ENCODE measurements at regions of chr10 and their contacts with region 1.

Region 1: DNA sequence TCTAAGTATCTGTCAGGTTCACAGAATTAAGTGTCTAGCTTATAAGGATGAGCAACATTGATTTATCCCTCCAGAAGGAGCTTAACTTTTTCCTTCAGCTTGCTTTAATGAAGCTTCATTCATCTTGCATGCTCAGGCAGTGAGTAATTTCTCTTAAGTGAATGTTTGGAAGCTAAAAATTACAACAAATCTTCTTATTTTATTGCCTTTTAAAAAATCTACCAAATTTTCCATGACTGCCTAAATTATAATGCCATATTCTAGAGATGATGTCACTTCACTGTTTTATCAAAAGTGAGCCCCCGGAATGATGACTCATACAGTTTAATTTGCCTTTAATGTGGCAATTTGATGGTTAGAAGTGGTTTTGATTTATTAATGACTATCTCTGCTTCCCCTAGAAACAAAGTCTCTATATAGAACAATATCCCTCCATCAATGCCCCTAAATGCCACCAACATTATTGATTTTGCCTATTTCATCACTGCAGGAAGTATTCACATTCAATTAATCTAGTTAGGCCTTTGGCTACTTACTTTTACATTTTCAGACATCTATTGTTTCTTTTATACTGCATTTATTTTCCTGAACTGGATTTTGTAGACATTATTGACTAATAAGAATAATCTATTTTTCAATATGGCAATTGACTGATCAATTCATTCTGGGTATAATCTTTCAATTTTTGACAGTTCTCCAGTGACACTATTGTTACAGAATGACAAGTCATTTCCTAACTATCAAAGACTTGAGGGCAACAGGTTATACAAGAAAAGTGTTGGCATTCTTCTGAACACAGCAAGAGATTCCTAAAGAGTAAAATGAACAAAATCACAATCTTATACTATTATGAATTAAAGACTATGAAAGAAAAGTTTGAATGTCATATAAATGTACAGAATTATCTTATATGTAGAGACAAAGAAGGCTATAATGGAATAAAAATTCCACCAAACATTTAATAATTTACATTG is 139.3 kb upstream of the ODAD2 start:
- DNase-seq: no peak
- H3K4me3 Mint-ChIP-seq: no peak overlapping the region
- H3K27ac Mint-ChIP-seq: no peak overlapping the region
- H3K4me1 Mint-ChIP-seq: no peaks in the 10 kb centered on the region
- H3K27me3 Mint-ChIP-seq: no peaks in the 10 kb centered on the region
- CTCF ChIP-seq: no peak

Region 2: DNA sequence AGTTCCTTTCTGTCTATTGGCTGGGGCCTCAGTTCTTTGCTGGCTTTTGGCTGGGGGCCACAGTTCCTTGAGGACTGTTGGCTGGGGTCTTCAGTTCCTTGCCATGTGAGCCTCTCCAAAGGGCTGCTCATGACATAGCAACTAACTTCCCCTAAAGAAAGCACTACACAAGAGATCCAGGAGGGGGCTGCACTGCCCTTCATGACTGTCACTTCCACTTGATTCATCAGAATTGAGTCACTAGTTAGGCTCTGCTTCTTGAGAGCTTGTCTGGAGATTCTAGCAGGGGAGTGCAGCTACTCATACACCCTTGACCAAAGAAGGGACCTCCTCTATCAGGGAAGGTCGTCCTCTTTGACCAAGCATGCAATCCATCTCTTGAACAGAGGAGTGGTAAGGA is 354.5 kb before region 1 on chr10:
- CTCF ChIA-PET with region 1: no interaction called
- POLR2A ChIA-PET with region 1: no interaction called
- intact Hi-C with region 1: loop called (anchors 5 kb)
- DNase-seq: peak; percentile 64
- H3K4me3 Mint-ChIP-seq: no peak overlapping the region
- H3K27ac Mint-ChIP-seq: no peak overlapping the region
- H3K4me1 Mint-ChIP-seq: no peaks in the 10 kb centered on the region
- H3K27me3 Mint-ChIP-seq: no peaks in the 10 kb centered on the region
- CTCF ChIP-seq: peak; percentile 29

Region 3: GRCh38 chr10:28054228-28054837 is 83.9 kb before region 1 on chr10:
- CTCF ChIA-PET with region 1: no interaction called
- POLR2A ChIA-PET with region 1: no interaction called
- intact Hi-C with region 1: no loop called
- DNase-seq: peak; percentile 78
- H3K4me3 Mint-ChIP-seq: peak overlapping the region; percentile 24
- H3K27ac Mint-ChIP-seq: peak overlapping the region; percentile 89
- H3K4me1 Mint-ChIP-seq: peaks cover 25% of the 10 kb centered on the region
- H3K27me3 Mint-ChIP-seq: no peaks in the 10 kb centered on the region
- CTCF ChIP-seq: no peak

Region 4: GRCh38 chr10:28418069-28418468 is 279.9 kb after region 1 on chr10:
- CTCF ChIA-PET with region 1: no interaction called
- POLR2A ChIA-PET with region 1: no interaction called
- intact Hi-C with region 1: no loop called
- DNase-seq: no peak
- H3K4me3 Mint-ChIP-seq: no peak overlapping the region
- H3K27ac Mint-ChIP-seq: no peak overlapping the region
- H3K4me1 Mint-ChIP-seq: no peaks in the 10 kb centered on the region
- H3K27me3 Mint-ChIP-seq: peaks cover 10% of the 10 kb centered on the region
- CTCF ChIP-seq: no peak

Measured in MCF 10A (cell line).